A549 (cell line): ENCODE measurements at regions of chr1 and their contacts with region 1.

Region 1: DNA sequence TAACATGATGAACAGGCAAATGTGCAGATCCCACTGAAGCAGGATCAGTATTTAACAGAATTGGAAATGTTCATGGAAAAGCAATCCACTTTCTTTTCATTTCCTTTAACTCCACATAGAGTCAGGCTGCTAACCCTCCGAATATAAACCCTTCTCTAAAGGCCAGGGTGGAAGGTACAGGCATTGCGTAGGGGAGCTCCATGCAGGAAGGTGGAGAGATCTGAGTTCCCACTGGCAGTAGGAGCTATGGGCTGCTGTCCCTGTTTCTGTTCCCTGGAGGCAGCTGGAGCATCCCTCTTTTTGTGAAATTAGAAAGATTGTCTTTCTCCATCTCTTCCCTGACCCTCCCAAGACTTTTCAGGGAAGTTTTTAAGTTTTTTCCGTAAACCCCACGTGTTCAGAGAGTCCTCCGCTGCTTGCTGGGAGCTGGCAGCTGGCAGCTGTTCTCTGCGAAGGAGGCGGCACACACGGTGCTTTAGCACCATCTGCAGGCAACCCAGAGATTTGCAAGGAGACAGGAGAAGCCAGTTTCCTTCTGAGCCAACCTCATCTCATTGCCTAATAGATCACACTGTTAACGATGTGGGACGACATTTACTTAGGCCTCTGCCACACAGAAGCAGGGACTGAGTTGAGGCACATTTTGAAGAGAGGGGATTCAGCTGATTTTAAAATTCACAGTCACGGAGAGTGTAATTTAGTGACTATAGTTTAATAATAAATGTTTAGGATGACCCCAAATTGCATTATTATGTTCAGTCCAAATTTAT is 55.4 kb upstream of the HOOK1 start:
- DNase-seq: peak; percentile 56 to 71
- ATAC-seq: peak; percentile 98 to 99
- H3K4me3 ChIP-seq: no peak overlapping the region
- H3K27ac ChIP-seq: peak overlapping the region; percentile 56 to 79
- H3K4me1 ChIP-seq: 0 out of 3 replicates have a peak, but pooled peaks cover 3% of the 10 kb centered on the region
- CTCF ChIP-seq: peak; percentile 81
- EP300 ChIP-seq: no peak
- POLR2A ChIP-seq: no peak
- RAD21 ChIP-seq: peak; percentile 95 to 96

Region 2: GRCh38 chr1:58739856-58740466 is 1019.4 kb before region 1 on chr1:
- CTCF ChIA-PET with region 1: interaction called, 10 read pairs
- POLR2A ChIA-PET with region 1: no interaction called
- DNase-seq: peak; percentile 23 to 35
- ATAC-seq: peak in 1 of 2 experiments; percentile 75; a peak in 4 of 6 replicates
- H3K4me3 ChIP-seq: no peak overlapping the region
- H3K27ac ChIP-seq: no peak overlapping the region
- H3K4me1 ChIP-seq: no peaks in the 10 kb centered on the region
- CTCF ChIP-seq: peak; percentile 83
- EP300 ChIP-seq: no peak
- POLR2A ChIP-seq: no peak
- RAD21 ChIP-seq: peak; percentile 91 to 94

Region 3: GRCh38 chr1:59699227-59699847 is 60.0 kb before region 1 on chr1:
- CTCF ChIA-PET with region 1: interaction called, 10 read pairs
- POLR2A ChIA-PET with region 1: no interaction called
- DNase-seq: peak; percentile 18 to 30
- ATAC-seq: no peak
- H3K4me3 ChIP-seq: no peak overlapping the region
- H3K27ac ChIP-seq: no peak overlapping the region
- H3K4me1 ChIP-seq: peaks cover 6% of the 10 kb centered on the region; the same call in 1 of the 3 replicates
- CTCF ChIP-seq: peak; percentile 81
- EP300 ChIP-seq: no peak
- POLR2A ChIP-seq: no peak
- RAD21 ChIP-seq: peak; percentile 87 to 89

Region 4: DNA sequence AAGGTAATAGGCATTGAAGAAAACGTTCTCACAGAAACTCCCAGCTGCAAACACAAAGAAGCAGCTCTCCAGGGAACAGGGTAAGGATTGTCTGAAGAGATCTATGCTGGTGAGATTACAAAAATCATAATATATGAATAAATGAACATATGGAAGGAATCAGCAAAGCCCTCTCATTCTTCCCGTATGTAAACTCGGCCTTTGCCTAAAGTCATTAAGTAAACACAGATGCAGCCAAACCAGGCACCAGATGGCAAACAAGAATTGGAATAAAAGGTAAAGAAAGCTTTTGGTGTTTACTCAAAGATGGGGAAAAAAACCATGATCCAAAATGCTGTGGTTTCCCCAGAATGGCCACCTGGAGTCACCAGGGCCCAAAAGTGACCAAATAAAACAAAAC is 21.2 kb before region 1 on chr1:
- CTCF ChIA-PET with region 1: interaction called, 11 read pairs
- POLR2A ChIA-PET with region 1: no interaction called
- DNase-seq: no peak
- ATAC-seq: no peak
- H3K4me3 ChIP-seq: no peak overlapping the region
- H3K27ac ChIP-seq: no peak overlapping the region
- H3K4me1 ChIP-seq: no peaks in the 10 kb centered on the region
- CTCF ChIP-seq: no peak
- EP300 ChIP-seq: no peak
- POLR2A ChIP-seq: no peak
- RAD21 ChIP-seq: no peak

Region 5: DNA sequence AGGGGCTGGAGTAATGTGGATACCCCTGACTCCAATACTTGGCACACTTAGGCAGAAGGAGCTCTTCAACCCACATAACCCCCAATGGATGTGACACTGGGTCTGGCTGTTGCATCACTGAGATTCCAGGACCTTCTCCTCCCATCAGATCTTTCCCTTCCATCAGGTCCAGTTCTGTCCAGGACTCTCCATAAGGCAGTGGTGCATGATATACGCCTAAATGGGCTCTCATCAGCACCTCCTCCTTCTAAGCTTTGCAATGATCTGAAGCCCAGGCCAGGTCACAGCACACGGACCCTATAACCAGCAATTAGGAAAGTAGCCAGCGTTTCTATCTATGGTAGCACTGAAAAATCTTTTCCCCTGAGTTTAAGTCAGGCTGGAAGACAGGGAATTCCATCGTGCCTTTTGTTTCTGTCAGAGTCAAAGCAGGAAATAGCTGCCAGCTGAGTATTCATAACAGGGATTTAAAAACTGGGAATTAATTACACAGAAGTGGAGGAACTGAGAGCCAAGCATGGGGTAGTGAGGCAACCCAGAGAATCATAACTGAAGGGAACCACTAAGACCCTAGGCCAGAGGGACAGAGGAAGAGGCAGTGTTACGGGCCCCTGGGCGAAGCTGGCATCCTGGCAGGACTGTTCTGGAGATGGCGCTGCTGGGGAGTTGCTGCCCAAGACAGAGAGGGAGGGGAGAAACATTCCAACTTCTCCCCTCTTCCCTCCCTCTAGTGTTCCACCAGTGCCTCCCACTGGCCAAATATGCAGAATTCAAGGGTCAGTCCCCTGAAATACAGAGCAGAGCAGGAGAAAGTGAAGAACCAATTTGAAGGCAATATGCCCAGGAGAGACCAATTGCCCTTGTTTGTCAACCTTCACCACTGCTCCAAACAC is 17.9 kb after region 1 on chr1:
- CTCF ChIA-PET with region 1: interaction called, 14 read pairs
- POLR2A ChIA-PET with region 1: no interaction called
- DNase-seq: no peak
- ATAC-seq: no peak
- H3K4me3 ChIP-seq: no peak overlapping the region
- H3K27ac ChIP-seq: no peak overlapping the region
- H3K4me1 ChIP-seq: no peaks in the 10 kb centered on the region
- CTCF ChIP-seq: no peak
- EP300 ChIP-seq: no peak
- POLR2A ChIP-seq: no peak
- RAD21 ChIP-seq: peak in 1 of 2 experiments; percentile 13; a peak in 1 of 5 replicates